ENCODE measurements at regions of chr15 and their contacts with region 1.

Region 1: GRCh38 chr15:94526071-94526689 is 294.8 kb downstream of the MCTP2 start:
- DNase-seq: no peak
- H3K4me3 ChIP-seq: no peak overlapping the region; a peak in 1 of 4 replicates
- H3K27ac ChIP-seq: no peak overlapping the region
- H3K4me1 ChIP-seq: peaks cover 0 to 6% of the 10 kb centered on the region in 2 experiments; a peak in 1 of 4 replicates
- H3K27me3 ChIP-seq: no peaks in the 10 kb centered on the region
- CTCF ChIP-seq: no peak; the same call in 1 of the 2 replicates
- EP300 ChIP-seq: no peak
- RAD21 ChIP-seq: no peak

Region 2: DNA sequence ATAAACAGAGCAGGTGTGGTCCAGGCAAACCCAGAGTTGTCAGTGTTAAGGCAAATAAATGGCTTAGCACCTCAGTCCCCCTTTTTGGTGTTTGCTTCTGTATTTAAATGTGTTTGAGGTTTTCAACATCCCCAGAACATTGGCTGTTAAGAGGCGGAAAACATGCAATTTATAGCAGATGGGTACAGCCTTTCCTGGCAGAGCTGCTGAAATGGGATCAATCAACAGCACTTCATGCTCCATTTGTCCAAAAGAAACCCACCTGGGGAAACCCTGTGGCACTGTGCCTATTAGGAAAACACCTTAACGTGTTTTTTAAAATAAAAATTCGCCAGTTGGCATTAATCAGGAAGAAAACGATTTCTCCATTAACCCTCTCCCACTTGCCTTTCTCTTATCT is 159.4 kb before region 1 on chr15:
- CTCF ChIA-PET with region 1: no interaction called
- POLR2A ChIA-PET with region 1: no interaction called
- DNase-seq: no peak
- H3K4me3 ChIP-seq: no peak overlapping the region
- H3K27ac ChIP-seq: no peak overlapping the region
- H3K4me1 ChIP-seq: no peaks in the 10 kb centered on the region; a peak in 1 of 4 replicates
- H3K27me3 ChIP-seq: no peaks in the 10 kb centered on the region
- CTCF ChIP-seq: no peak
- EP300 ChIP-seq: no peak
- RAD21 ChIP-seq: no peak

Region 3: GRCh38 chr15:94494732-94495131 is 31.4 kb before region 1 on chr15:
- CTCF ChIA-PET with region 1: no interaction called
- POLR2A ChIA-PET with region 1: no interaction called
- DNase-seq: no peak
- H3K4me3 ChIP-seq: no peak overlapping the region
- H3K27ac ChIP-seq: no peak overlapping the region
- H3K4me1 ChIP-seq: no peaks in the 10 kb centered on the region
- H3K27me3 ChIP-seq: no peaks in the 10 kb centered on the region
- CTCF ChIP-seq: no peak
- EP300 ChIP-seq: no peak
- RAD21 ChIP-seq: no peak

Region 4: GRCh38 chr15:94509259-94509658 is 16.9 kb before region 1 on chr15:
- CTCF ChIA-PET with region 1: interaction called, 10 read pairs
- POLR2A ChIA-PET with region 1: no interaction called
- DNase-seq: no peak
- H3K4me3 ChIP-seq: no peak overlapping the region
- H3K27ac ChIP-seq: no peak overlapping the region
- H3K4me1 ChIP-seq: no peaks in the 10 kb centered on the region
- H3K27me3 ChIP-seq: no peaks in the 10 kb centered on the region
- CTCF ChIP-seq: no peak
- EP300 ChIP-seq: no peak
- RAD21 ChIP-seq: no peak

Region 5: DNA sequence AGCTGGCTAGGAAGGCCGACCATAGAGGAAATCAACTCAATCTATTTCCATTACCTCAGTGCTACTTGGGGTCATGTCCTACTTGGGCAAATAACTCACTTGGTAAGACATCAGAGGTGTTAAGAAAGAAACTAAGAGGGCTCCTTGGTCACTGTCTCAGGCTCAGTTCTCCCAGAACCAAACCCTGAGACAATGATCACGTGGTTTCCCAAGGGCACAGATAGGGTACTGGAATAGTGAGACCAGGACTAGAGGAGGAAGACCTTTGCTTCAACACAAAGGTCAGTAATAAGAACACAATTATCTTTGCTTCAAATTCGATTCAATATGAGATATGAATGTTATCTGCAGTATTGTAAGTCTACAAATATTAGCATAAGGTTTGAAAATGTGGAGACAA is 14.5 kb after region 1 on chr15:
- CTCF ChIA-PET with region 1: interaction called, 11 read pairs
- POLR2A ChIA-PET with region 1: no interaction called
- DNase-seq: no peak
- H3K4me3 ChIP-seq: no peak overlapping the region
- H3K27ac ChIP-seq: no peak overlapping the region
- H3K4me1 ChIP-seq: no peaks in the 10 kb centered on the region
- H3K27me3 ChIP-seq: no peaks in the 10 kb centered on the region
- CTCF ChIP-seq: no peak
- EP300 ChIP-seq: no peak
- RAD21 ChIP-seq: no peak